CD4-positive, alpha-beta T cell (primary cell): ENCODE measurements at regions of chr18 and their contacts with region 1.

Region 1: DNA sequence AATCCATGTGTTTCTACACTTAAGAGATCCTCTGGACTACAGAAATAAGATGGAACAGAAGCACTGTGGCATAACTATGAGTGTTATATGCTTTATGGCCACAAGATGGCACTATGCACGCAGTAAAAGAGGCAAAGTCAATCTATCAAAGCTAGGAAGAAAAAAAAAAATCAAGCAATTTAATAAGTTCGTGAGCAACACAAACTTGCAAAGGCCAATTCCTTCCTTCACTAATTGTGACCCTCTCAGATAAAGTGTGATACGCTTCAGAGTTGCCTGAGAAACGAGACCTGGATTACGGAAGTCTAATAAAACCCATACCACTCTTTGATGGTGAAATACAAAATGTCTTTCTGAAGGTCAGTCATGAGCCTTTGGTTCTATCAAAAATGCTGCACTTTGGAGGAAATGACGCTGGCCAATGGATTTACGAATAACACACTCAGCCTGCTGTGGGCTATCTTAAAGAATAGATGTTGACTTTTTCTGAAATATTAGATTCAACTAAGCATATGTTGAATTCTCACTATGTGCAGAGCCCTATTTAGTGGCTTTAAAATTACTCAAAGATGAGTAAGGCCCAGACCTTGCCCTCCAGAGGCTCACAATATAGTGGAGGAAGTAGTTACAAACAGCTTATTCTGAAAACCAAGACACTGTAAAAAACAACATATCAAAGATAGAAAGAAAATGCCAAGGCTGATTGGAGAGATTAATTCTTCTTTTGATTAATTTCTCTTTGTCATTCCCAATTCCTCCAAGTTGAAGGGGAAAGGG is 35.5 kb upstream of the TTR start:
- DNase-seq: peak in 6 of 14 experiments; percentile 4 to 71 (median 34)
- ATAC-seq: peak; percentile 54
- H3K4me3 ChIP-seq: no peak overlapping the region
- H3K4me3 Mint-ChIP-seq: no peak overlapping the region
- H3K27ac ChIP-seq: no peak overlapping the region
- H3K27ac Mint-ChIP-seq: no peak overlapping the region
- H3K4me1 ChIP-seq: no peaks in the 10 kb centered on the region
- H3K4me1 Mint-ChIP-seq: peaks cover 4% of the 10 kb centered on the region
- H3K27me3 ChIP-seq: peaks cover 0 to 2% of the 10 kb centered on the region in 2 experiments
- H3K27me3 Mint-ChIP-seq: peaks cover 13% of the 10 kb centered on the region
- CTCF ChIP-seq: peak; percentile 87

Region 2: GRCh38 chr18:30999186-30999585 is 557.0 kb before region 1 on chr18:
- CTCF ChIA-PET with region 1: no interaction called
- POLR2A ChIA-PET with region 1: no interaction called
- intact Hi-C with region 1: loop called in 1 of 2 experiments (anchors 10 kb)
- DNase-seq: no peak
- ATAC-seq: no peak
- H3K4me3 ChIP-seq: no peak overlapping the region
- H3K4me3 Mint-ChIP-seq: no peak overlapping the region
- H3K27ac ChIP-seq: no peak overlapping the region
- H3K27ac Mint-ChIP-seq: no peak overlapping the region
- H3K4me1 ChIP-seq: no peaks in the 10 kb centered on the region
- H3K4me1 Mint-ChIP-seq: no peaks in the 10 kb centered on the region
- H3K27me3 ChIP-seq: no peaks in the 10 kb centered on the region
- H3K27me3 Mint-ChIP-seq: no peaks in the 10 kb centered on the region
- CTCF ChIP-seq: peak; percentile 10

Region 3: GRCh38 chr18:31722369-31722957 is 166.3 kb after region 1 on chr18:
- CTCF ChIA-PET with region 1: interaction called, 7 read pairs
- POLR2A ChIA-PET with region 1: no interaction called
- intact Hi-C with region 1: loop called (anchors 1 to 2 kb)
- DNase-seq: peak; percentile 43 to 81 (median 58)
- ATAC-seq: peak; percentile 78
- H3K4me3 ChIP-seq: no peak overlapping the region
- H3K4me3 Mint-ChIP-seq: peak overlapping the region; percentile 64
- H3K27ac ChIP-seq: no peak overlapping the region
- H3K27ac Mint-ChIP-seq: no peak overlapping the region
- H3K4me1 ChIP-seq: peaks cover 5% of the 10 kb centered on the region
- H3K4me1 Mint-ChIP-seq: peaks cover 7% of the 10 kb centered on the region
- H3K27me3 ChIP-seq: peaks cover 13 to 24% of the 10 kb centered on the region in 2 experiments
- H3K27me3 Mint-ChIP-seq: peaks cover 37% of the 10 kb centered on the region
- CTCF ChIP-seq: peak; percentile 78

Region 4: DNA sequence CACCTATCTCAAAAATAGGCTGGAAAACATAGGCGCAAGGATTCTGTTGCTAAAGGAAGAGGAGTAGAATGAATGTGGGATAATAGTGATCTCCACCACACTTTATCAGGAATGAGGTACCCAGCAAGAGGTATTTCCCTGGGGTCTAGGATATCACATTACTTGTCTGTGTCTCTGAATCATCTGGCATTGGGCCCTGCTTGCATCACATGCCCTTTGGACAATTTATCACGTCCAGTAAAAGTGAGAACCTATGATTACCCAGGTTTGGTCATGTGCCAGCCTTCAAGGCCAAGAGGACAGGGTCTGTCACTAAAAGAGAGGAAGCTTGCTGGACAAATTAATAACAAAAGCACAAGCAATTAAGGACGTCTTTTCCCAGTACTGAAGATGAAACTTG is 398.2 kb after region 1 on chr18:
- CTCF ChIA-PET with region 1: no interaction called
- POLR2A ChIA-PET with region 1: no interaction called
- intact Hi-C with region 1: loop called (anchors 5 kb)
- DNase-seq: no peak
- ATAC-seq: no peak
- H3K4me3 ChIP-seq: no peak overlapping the region
- H3K4me3 Mint-ChIP-seq: no peak overlapping the region
- H3K27ac ChIP-seq: no peak overlapping the region
- H3K27ac Mint-ChIP-seq: no peak overlapping the region
- H3K4me1 ChIP-seq: no peaks in the 10 kb centered on the region
- H3K4me1 Mint-ChIP-seq: no peaks in the 10 kb centered on the region
- H3K27me3 ChIP-seq: no peaks in the 10 kb centered on the region
- H3K27me3 Mint-ChIP-seq: no peaks in the 10 kb centered on the region
- CTCF ChIP-seq: no peak

Region 5: DNA sequence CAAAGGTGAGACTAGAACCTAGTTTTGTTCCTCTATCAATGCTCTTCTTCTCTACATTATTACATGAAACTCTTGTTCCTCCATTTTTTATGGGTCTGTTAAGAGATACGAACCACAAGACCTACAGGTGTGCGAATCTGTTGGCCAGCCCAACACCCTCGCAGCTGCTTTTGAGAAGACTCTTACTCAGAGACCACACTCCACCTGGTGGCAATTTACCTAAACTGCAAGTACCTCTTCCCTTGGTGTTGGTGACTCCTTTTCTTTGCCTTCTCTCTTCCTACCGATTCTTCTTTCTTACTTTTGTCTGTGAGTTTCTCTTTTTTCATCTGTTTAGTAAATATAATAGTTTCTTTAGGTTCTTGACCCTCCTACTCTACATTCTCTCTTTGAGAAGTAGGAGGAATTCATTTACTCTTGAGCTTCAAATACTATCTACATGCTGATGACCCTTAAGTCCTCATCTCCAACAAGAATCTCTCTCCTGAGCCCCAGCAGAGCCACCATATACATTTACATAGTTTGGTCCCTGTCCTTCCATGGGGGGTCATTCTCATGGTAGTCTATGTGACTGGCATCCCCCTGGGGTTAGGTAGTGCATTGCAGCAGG is 996.4 kb after region 1 on chr18:
- CTCF ChIA-PET with region 1: no interaction called
- POLR2A ChIA-PET with region 1: no interaction called
- intact Hi-C with region 1: loop called (anchors 5 kb)
- DNase-seq: peak; percentile 9 to 79 (median 44)
- ATAC-seq: peak; percentile 71
- H3K4me3 ChIP-seq: no peak overlapping the region
- H3K4me3 Mint-ChIP-seq: no peak overlapping the region
- H3K27ac ChIP-seq: no peak overlapping the region
- H3K27ac Mint-ChIP-seq: no peak overlapping the region
- H3K4me1 ChIP-seq: no peaks in the 10 kb centered on the region
- H3K4me1 Mint-ChIP-seq: no peaks in the 10 kb centered on the region
- H3K27me3 ChIP-seq: no peaks in the 10 kb centered on the region
- H3K27me3 Mint-ChIP-seq: peaks cover 21% of the 10 kb centered on the region
- CTCF ChIP-seq: peak; percentile 78